ENCODE measurements at regions of chr16 and their contacts with region 1.

Region 1: DNA sequence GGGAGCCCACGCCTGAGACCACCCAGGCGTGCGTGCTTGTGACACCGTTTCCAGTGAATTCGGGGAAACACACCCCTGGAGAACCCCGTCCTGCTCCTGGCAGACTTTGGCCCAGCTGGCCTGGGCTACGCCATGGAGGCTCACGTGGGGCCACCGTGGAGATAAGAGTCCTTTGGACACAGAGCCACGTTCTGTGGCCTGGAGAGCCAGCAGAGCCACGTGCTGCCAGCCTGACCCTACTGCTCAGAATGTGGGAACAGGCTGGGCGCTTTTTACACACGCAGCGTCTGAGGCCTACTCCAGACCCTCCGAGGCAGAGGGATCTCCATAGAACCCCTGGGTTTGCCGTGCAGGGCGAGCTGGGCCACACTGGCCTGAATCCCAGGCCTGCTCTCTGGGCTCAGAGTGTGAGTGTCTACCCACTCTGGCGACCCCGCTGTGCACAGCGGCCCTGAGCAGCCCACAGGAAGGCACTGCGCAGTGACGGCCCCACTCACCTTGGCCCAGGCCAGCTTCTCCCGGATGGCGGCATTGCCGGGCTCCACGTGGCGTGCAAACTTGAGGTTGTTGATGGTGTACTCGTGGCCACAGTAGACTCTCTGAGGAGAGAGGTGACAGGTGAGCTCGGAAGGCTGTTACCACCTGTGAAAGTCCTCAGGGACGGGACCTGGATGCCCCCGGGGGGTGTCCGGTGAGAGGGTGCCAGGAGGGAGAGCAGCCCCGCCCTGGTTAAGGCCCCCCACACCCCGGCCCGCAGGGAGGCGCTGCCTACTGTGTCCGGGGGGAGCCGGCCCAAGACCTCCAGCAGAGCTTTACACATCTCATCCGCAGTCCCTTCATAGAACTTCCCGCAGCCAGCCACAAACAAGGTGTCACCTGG is 10.0 kb downstream of the HAGH start:
- DNase-seq: no peak
- ATAC-seq: no peak
- H3K4me3 ChIP-seq: no peak overlapping the region
- H3K27ac ChIP-seq: no peak overlapping the region
- H3K4me1 ChIP-seq: no peaks in the 10 kb centered on the region
- H3K27me3 ChIP-seq: no peaks in the 10 kb centered on the region
- CTCF ChIP-seq: no peak
- EP300 ChIP-seq: no peak
- POLR2A ChIP-seq: no peak
- RAD21 ChIP-seq: no peak

Region 2: DNA sequence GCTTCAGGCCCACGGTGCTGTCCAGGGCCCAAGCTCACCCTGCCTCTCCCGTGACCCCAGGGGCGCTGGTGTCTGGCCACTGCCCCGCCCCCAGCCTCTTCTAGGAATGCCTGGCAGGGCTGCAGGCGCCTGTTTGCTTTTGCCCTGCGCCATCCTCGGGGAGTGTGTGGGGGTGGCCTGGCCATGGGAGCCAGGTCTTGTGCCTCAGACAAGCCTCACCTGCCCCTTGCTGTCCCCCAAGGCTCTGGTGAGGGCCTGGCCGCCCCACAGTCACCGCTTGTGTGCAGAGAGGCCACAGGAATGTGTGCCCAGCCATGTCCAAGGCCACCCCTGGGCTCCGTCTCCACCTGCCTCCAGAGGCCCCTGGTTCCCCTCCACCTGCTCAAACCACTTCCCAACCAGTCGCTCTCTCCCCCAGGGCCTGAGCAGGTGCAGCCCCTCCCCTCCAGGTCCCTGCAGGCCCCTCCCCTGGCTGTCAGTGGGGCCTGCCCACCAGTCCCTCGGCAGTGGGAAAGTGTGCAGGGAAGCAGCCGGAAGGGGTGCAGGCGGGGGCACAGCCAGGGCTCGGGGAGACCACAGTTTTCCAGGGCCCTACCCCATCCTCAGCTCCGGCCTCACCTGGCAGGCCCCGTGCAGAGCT is 22.3 kb before region 1 on chr16:
- CTCF ChIA-PET with region 1: no interaction called
- POLR2A ChIA-PET with region 1: interaction called, 10 read pairs
- RAD21 ChIA-PET with region 1: no interaction called
- SMC1A ChIA-PET with region 1: no interaction called
- in situ Hi-C with region 1: no loop called
- intact Hi-C with region 1: no loop called
- DNase-seq: no peak
- ATAC-seq: no peak
- H3K4me3 ChIP-seq: no peak overlapping the region
- H3K27ac ChIP-seq: no peak overlapping the region
- H3K4me1 ChIP-seq: no peaks in the 10 kb centered on the region
- H3K27me3 ChIP-seq: no peaks in the 10 kb centered on the region
- CTCF ChIP-seq: no peak
- EP300 ChIP-seq: no peak
- POLR2A ChIP-seq: no peak
- RAD21 ChIP-seq: no peak

Measured in GM12878 (cell line).